Activated CD8-positive, alpha-beta T cell treated with anti-CD3 and anti-CD28 coated beads, Interleukin-2, amount 10 ng/mL, durations not matched to agents 7 days and 5 days (primary cell): ENCODE measurements at regions of chrX and their contacts with region 1.

Region 1: GRCh38 chrX:17944833-17945497 is 83.9 kb upstream of the RAI2 start:
- DNase-seq: peak; percentile 22
- ATAC-seq: no peak
- H3K4me3 Mint-ChIP-seq: no peak overlapping the region
- H3K27ac Mint-ChIP-seq: no peak overlapping the region
- H3K4me1 Mint-ChIP-seq: no peaks in the 10 kb centered on the region
- H3K27me3 Mint-ChIP-seq: no peaks in the 10 kb centered on the region

Region 2: GRCh38 chrX:18377796-18378195 is 432.8 kb after region 1 on chrX:
- CTCF ChIA-PET with region 1: interaction called, 14 read pairs
- POLR2A ChIA-PET with region 1: no interaction called
- DNase-seq: peak; percentile 39
- ATAC-seq: no peak
- H3K4me3 Mint-ChIP-seq: no peak overlapping the region
- H3K27ac Mint-ChIP-seq: no peak overlapping the region
- H3K4me1 Mint-ChIP-seq: peaks cover 4% of the 10 kb centered on the region
- H3K27me3 Mint-ChIP-seq: peaks cover 3% of the 10 kb centered on the region

Region 3: DNA sequence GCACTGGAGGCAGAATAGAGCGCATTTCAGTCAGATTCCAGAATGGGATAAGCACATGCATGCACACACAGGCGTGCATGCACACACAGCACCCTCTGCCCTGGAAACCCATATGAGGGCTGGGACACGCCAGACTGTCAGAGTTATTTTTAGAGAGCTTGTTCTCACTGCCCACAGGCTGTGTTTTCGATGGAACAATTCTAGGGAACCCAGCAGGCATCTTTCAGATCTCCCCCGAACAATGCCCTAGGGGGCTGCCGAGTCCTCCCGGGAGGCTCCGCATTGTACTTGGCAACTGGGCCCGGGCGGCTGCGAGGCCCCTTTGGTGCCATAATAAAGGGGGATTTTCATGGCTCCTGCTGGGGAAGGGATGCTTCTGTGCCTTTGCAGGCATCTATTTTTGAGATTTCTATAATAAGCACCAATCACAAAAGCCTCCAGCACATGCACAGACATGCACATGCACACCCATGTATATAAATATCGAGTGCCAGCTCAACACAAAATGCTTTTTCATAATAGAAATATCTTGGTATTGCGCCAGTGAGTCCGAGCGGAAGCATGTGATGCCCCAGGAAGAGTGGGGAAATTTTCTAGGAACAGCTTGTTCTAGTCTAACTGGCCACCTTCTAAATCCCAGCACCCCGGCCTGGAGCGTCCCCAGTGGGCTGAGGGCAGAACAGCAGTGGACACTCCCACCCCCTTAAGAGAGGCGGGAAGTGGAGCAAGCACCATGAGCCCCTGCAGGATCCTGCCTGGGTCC is 950.4 kb after region 1 on chrX:
- CTCF ChIA-PET with region 1: no interaction called
- POLR2A ChIA-PET with region 1: no interaction called
- DNase-seq: no peak
- ATAC-seq: no peak
- H3K4me3 Mint-ChIP-seq: no peak overlapping the region
- H3K27ac Mint-ChIP-seq: no peak overlapping the region
- H3K4me1 Mint-ChIP-seq: no peaks in the 10 kb centered on the region
- H3K27me3 Mint-ChIP-seq: no peaks in the 10 kb centered on the region